HEK293 (cell line): ENCODE measurements at regions of chr6 and their contacts with region 1.

Region 1: DNA sequence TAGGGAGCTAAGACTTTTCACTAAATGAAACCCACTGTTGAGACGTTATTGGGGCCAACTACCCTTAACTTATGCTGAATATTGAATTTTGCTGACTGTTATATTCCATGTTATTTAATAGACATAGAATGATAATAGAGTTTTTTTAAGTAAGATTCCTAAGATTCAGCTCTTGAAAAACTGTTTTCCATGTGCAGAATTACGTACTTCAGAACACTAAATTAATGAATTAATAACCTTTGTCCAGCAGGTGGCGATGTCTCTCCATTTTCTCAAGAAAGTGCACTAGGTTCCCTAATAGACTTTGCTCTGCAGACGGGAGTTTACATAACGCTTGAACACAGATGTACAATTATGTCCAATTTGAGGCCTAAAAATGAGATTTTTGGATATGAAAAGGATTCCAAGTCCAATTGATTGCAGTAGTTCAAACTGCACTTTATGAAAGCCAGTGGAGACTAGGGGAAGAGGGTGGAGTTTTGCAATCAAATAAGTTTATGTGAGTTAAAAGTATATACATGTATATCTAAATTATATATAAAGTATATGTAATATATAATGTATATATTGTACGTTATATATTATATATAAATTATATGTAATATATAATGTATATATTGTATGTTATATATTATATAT is 282.1 kb downstream of the UST start:
- H3K4me3 ChIP-seq: no peak overlapping the region
- H3K27ac ChIP-seq: no peak overlapping the region
- H3K4me1 ChIP-seq: peaks cover 14% of the 10 kb centered on the region
- CTCF ChIP-seq: peak; percentile 19; the same call in 1 of the 2 replicates

Region 2: GRCh38 chr6:148997865-148998264 is 31.0 kb before region 1 on chr6:
- CTCF ChIA-PET with region 1: interaction called, 11 read pairs
- POLR2A ChIA-PET with region 1: no interaction called
- H3K4me3 ChIP-seq: no peak overlapping the region
- H3K27ac ChIP-seq: no peak overlapping the region
- H3K4me1 ChIP-seq: 0 out of 2 replicates have a peak, but pooled peaks cover 2% of the 10 kb centered on the region
- CTCF ChIP-seq: no peak

Region 3: DNA sequence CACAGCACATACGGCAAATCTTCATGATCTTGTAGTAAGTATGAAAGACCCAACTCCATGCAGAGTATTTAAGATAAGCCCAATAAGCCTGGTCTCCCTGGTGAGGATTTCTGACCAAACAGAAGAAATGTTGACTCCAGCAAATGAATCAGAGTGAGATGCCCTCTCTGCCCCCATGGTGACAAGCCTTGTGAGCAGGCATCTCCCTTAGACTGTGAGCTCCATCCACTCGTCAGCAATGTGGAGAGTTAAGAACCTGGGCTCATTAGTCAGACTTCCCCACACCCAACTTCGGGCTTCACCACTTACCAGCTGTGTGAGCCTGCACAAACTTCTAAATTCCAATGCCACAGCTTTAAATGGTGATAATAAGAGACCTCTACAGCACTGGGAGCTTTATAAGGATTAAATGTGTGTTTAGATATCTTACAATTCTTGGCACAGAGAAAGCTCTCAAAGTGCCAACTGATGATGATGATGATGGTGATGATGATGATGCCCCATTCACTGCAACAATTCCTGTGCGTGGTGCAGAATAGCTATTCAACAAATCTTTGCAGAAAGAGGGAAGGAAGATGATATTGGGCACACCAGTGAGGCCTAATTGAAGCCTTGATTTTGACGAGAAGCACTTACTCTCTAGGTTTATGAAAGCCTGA is 35.2 kb after region 1 on chr6:
- CTCF ChIA-PET with region 1: interaction called, 11 read pairs
- POLR2A ChIA-PET with region 1: no interaction called
- H3K4me3 ChIP-seq: no peak overlapping the region
- H3K27ac ChIP-seq: no peak overlapping the region
- H3K4me1 ChIP-seq: peaks cover 29% of the 10 kb centered on the region
- CTCF ChIP-seq: no peak

Region 4: DNA sequence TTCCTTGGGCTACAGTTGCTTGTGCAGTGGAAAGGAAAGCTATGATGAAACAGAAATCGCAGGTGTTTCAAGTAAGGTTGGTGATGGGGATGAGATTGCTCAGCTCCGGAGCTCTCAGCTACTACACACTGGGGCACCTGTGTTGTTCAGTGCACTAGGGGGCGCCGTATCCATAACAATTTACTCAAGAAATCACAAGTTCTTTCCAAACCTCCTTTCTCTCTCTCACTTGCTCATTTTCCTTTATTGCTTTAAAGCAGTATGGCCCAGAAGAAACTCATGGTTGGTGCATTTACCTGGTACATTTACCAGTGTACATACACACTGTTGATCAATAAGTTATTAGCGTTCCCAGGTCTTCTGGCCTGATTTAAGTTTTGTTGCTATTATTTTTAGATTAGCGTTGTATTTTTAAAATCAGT is 53.4 kb after region 1 on chr6:
- CTCF ChIA-PET with region 1: interaction called, 14 read pairs
- POLR2A ChIA-PET with region 1: no interaction called
- H3K4me3 ChIP-seq: no peak overlapping the region
- H3K27ac ChIP-seq: no peak overlapping the region
- H3K4me1 ChIP-seq: peaks cover 11% of the 10 kb centered on the region
- CTCF ChIP-seq: peak; percentile 78